Activated CD4-positive, alpha-beta memory T cell treated with anti-CD3 and anti-CD28 coated beads, Interleukin-2, amount 10 ng/mL, durations not matched to agents 7 days and 5 days (primary cell): ENCODE measurements at regions of chr13 and their contacts with region 1.

Region 1: DNA sequence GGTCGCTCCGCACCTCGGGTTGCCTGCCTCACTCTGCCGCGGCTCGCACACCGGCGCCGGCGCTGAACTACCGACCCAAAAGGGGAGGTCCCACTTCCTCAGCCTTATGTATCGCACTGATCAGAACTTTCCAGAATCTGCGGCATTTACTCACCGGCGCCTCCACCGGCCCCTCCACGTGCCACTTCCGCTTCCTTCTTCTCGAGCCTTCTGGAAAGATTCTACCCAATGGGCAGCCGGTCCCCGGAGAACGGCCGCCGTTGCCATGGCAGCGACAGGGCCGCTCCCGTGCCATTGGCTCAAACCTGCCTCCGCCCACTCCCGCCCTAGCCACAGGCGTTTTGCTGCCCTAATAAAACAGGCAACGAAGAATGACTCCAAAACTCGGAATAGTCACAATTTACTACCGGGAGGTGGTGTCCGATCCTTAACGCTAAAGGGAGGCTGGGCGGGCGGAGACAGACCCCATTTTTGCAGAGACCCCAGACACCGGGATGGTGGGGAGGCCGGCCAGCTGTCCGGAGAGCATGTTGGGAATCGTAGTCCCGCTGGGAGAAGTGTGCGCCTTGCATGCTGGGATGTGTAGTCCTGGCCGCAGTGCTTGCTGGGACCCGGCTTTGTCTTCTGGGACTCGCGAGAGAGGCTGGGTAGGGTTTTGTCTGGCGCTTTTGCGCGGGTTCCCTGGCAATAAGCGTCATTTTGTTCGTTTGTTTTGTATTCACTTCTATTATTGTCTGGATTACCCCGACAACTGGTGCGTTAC is at the start of gene HSPH1:
- DNase-seq: peak; percentile 99
- H3K4me3 Mint-ChIP-seq: peak within 1 kb of the TSS; percentile 94
- H3K27ac Mint-ChIP-seq: peak within 1 kb of the TSS; percentile 96
- H3K4me1 Mint-ChIP-seq: peaks cover 44% of the 10 kb centered on the region
- H3K27me3 Mint-ChIP-seq: no peaks in the 10 kb centered on the region
- total RNA-seq, gene HSPH1: 95.4 to 103 TPM

Region 2: DNA sequence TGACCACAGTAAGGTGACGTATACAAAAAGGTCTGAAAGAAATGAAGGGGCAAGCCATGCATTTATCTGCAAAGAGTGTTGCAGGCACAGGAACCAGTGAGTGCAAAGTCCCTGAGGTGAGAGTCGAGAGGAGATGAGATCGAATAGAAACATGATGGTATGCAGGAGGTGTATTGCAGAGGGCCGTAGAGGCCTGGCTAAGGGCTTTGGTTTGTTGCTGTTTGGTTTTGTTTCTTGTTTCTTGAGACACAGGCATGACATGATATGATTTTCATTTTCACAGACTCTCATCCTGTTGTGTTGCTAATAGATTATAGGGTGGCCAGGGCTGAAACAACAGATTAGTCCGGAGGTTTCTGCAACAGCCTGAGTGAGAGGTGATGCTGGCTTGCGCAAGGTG is 80.7 kb before region 1 on chr13:
- CTCF ChIA-PET with region 1: no interaction called
- POLR2A ChIA-PET with region 1: no interaction called
- DNase-seq: no peak
- H3K4me3 Mint-ChIP-seq: no peak overlapping the region
- H3K27ac Mint-ChIP-seq: no peak overlapping the region
- H3K4me1 Mint-ChIP-seq: peaks cover 6% of the 10 kb centered on the region
- H3K27me3 Mint-ChIP-seq: peaks cover 27% of the 10 kb centered on the region

Region 3: DNA sequence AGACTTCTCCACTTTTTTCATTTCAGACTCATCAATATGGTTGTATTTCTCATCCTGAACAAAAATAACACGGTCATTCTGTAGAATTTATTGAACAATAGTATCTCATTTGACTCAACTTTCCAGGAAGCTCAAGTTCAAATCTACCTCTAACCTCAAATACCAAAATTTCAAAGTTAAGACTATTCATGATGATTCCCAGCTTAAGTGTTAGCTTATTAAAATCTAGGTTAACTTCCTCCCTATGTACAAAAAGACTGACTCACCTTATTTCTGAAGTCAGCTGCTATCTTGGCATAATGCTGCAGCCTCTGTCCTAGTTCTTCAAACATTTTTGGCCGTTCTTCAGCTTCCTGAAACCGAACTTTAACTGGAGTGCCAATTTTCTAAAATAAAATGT is 23.5 kb before region 1 on chr13:
- CTCF ChIA-PET with region 1: interaction called, 4 read pairs
- POLR2A ChIA-PET with region 1: interaction called, 16 read pairs
- DNase-seq: no peak
- H3K4me3 Mint-ChIP-seq: no peak overlapping the region
- H3K27ac Mint-ChIP-seq: peak overlapping the region; percentile 6
- H3K4me1 Mint-ChIP-seq: peaks cover 54% of the 10 kb centered on the region
- H3K27me3 Mint-ChIP-seq: no peaks in the 10 kb centered on the region

Region 4: DNA sequence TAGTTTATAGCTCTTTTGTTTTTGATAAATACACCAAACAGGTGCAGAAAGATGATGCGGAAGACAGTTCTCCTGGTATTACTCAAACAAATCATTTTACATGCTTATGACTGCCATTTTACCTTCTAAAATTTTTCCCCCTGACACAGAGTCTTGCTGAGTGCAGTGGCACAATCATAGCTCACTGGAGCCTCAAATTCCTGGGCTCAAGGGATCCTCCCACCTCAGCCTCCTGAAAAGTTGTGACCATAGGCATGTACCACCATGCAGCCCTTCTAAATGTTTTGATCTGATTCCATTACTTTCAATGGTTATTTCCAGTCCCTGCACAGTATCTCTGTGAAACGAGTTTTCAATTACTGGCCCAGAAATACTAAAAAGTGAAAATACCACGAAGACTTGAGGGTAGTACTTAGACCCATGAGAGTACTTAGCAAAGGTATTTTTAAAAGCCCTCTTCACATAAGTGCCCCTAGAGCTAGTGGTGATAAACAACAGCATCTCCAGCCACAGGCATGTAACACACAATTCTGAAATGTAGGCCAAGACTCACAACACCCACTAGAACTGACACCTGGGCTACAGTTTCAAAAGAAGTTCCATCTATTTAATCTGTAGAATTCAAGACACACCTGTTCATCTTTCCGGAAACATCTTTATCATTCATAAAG is 11.6 kb before region 1 on chr13:
- CTCF ChIA-PET with region 1: interaction called, 7 read pairs
- POLR2A ChIA-PET with region 1: interaction called, 20 read pairs
- DNase-seq: no peak
- H3K4me3 Mint-ChIP-seq: no peak overlapping the region
- H3K27ac Mint-ChIP-seq: peak overlapping the region; percentile 37
- H3K4me1 Mint-ChIP-seq: peaks cover 22% of the 10 kb centered on the region
- H3K27me3 Mint-ChIP-seq: no peaks in the 10 kb centered on the region

Region 5: GRCh38 chr13:31199849-31200636 is 38.0 kb after region 1 on chr13 and contains the start of gene B3GLCT:
- CTCF ChIA-PET with region 1: interaction called, 19 read pairs
- POLR2A ChIA-PET with region 1: interaction called, 13 read pairs
- DNase-seq: peak; percentile 82
- H3K4me3 Mint-ChIP-seq: peak within 1 kb of the TSS; percentile 75
- H3K27ac Mint-ChIP-seq: peak within 1 kb of the TSS; percentile 72
- H3K4me1 Mint-ChIP-seq: peaks cover 29% of the 10 kb centered on the region
- H3K27me3 Mint-ChIP-seq: peaks cover 6% of the 10 kb centered on the region
- total RNA-seq, gene B3GLCT: 4.6 to 4.7 TPM